Psoas muscle (tissue), 8 donors: ENCODE measurements at regions of chr1 and their contacts with region 1.

Region 1: GRCh38 chr1:214454619-214455396 is 96.6 kb downstream of the PTPN14 start:
- DNase-seq: no peak
- ATAC-seq: peak in 3 of 4 donors; percentile 21 to 77 (median 75)
- H3K4me3 ChIP-seq: no peak overlapping the region
- H3K27ac ChIP-seq: peak overlapping the region; percentile 75
- H3K4me1 ChIP-seq: peaks cover 53% of the 10 kb centered on the region
- H3K27me3 ChIP-seq: no peaks in the 10 kb centered on the region
- CTCF ChIP-seq: no peak

Region 2: DNA sequence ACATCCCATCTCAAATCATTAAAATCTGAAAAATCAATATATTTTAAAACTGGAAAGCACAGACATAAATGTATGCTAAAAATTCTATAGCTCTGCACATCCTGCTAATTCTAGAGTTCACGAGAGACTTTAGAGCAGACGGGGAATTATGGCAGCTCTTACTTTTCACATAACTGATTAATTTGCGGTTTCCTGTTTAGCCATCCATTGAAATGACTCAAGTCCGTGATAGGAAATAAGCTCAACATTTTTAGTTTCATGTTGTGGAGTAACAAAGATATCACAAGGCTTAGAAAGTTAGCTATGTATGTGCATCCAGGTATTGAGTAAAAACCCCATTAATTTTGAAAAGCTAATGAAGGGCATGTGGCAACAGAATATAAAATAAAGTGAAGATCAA is 50.7 kb before region 1 on chr1:
- intact Hi-C with region 1: loop called in 1 of 2 experiments (anchors 5 kb)
- DNase-seq: no peak
- ATAC-seq: no peak
- H3K4me3 ChIP-seq: no peak overlapping the region
- H3K27ac ChIP-seq: peak overlapping the region; percentile 18
- H3K4me1 ChIP-seq: peaks cover 18% of the 10 kb centered on the region
- H3K27me3 ChIP-seq: no peaks in the 10 kb centered on the region
- CTCF ChIP-seq: no peak

Region 3: DNA sequence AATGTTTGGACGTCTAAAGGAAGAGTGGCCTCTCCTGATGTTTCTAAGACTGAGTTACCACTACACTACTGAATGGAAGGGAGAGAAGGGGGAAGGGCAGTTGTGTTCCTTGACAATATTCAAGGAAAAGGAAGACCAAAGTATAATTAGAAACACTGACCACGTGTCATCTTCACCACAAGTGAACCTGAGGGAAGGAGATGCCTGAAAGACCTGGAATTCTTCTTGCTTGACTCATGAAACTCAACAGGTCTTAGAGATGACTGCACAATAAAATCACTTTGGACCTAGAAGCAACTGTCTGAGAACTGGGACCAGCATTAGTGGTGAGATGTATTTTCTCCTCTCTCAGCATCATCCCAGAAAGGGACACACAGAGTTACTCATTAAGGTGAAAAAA is 39.9 kb after region 1 on chr1:
- intact Hi-C with region 1: loop called in 1 of 2 experiments (anchors 5 kb)
- DNase-seq: no peak
- ATAC-seq: peak in 2 of 4 donors; percentile 40 to 62
- H3K4me3 ChIP-seq: no peak overlapping the region
- H3K27ac ChIP-seq: peak overlapping the region; percentile 79
- H3K4me1 ChIP-seq: peaks cover 61% of the 10 kb centered on the region
- H3K27me3 ChIP-seq: no peaks in the 10 kb centered on the region
- CTCF ChIP-seq: no peak

Region 4: GRCh38 chr1:214584805-214585766 is 130.3 kb after region 1 on chr1:
- intact Hi-C with region 1: no loop called
- DNase-seq: no peak
- ATAC-seq: peak in 3 of 4 donors; percentile 33 to 71 (median 60)
- H3K4me3 ChIP-seq: no peak overlapping the region
- H3K27ac ChIP-seq: no peak overlapping the region
- H3K4me1 ChIP-seq: peaks cover 33% of the 10 kb centered on the region
- H3K27me3 ChIP-seq: no peaks in the 10 kb centered on the region
- CTCF ChIP-seq: peak; percentile 66